ENCODE measurements at regions of chr5 and their contacts with region 1.

Region 1: GRCh38 chr5:6820851-6821479 is 107.7 kb downstream of the TENT4A start:
- DNase-seq: peak in 2 of 10 donors; percentile 39 to 54
- H3K4me3 ChIP-seq: no peak overlapping the region
- H3K27ac ChIP-seq: peak overlapping the region in 1 of 59 donors; percentile 62
- H3K27me3 ChIP-seq: peaks cover 0 to 8% (median 0%) of the 10 kb centered on the region in 45 donors
- CTCF ChIP-seq: peak in 55 of 56 donors; percentile 18 to 70 (median 57)

Region 2: DNA sequence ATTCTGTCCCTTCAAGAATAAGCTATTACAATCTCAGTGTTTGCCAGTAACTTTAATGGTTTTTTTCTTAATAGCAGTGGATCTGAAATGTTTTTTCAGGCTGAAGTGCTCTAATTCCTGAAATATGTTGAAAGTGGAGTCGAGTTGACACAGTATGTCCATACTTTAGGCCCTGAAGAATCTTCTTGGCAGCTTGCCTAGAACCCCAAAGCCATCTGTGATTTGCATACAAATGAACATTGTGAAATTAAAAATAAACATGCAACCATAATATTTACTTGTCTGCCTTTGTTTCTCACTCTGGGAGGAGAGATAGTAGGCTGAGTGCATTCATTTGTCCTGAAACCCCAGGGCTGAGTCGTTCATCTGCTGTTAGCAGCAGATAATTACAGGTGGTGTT is 727.6 kb after region 1 on chr5:
- intact Hi-C with region 1: loop called in 1 of 2 experiments (anchors 10 kb)
- DNase-seq: no peak
- H3K4me3 ChIP-seq: no peak overlapping the region
- H3K27ac ChIP-seq: peak overlapping the region in 56 of 59 donors; percentile 16 to 86 (median 66)
- H3K27me3 ChIP-seq: no peaks in the 10 kb centered on the region
- CTCF ChIP-seq: no peak

Measured in dorsolateral prefrontal cortex (tissue), 120 donors.